ENCODE measurements at regions of chr1 and their contacts with region 1.

Region 1: GRCh38 chr1:85109475-85109874 is 61.2 kb upstream of the MCOLN3 start:
- DNase-seq: peak in 1 of 2 experiments; percentile 50
- H3K4me3 ChIP-seq: no peak overlapping the region
- H3K27ac ChIP-seq: no peak overlapping the region
- H3K4me1 ChIP-seq: no peaks in the 10 kb centered on the region
- H3K27me3 ChIP-seq: no peaks in the 10 kb centered on the region
- CTCF ChIP-seq: peak; percentile 82 to 94 (median 93)
- EP300 ChIP-seq: no peak
- POLR2A ChIP-seq: no peak
- RAD21 ChIP-seq: peak; percentile 97 to 98

Region 2: DNA sequence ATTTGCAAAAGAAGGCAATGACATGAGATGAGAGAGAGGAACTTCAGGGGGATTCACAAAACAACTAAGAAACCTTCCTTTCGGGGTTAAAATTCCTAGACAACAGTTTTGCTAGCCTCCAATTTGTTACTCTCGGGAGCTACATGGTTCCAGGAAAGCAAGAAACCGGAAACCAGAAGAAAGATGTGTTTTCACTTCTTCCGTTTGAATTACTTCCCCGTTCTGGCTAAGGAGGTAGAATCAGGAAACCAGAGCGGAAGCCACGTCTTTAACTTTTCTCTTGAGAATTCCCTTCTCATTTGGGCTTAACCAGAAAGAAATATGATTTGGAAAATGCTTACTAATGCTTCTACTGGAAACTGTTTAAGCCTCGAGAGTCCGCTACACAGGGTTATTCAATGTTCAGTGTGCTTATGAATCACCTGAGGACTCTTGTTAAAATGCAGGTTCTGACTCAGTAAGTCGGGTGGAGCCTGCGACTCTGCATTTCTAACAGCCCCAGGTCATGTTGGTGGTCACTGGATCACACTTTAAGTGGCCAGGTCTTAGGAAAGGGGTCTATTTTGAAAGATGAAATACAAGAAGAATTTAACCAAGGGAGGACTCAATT is 17.7 kb before region 1 on chr1:
- CTCF ChIA-PET with region 1: interaction called, 14 read pairs
- POLR2A ChIA-PET with region 1: no interaction called
- DNase-seq: no peak
- H3K4me3 ChIP-seq: no peak overlapping the region
- H3K27ac ChIP-seq: no peak overlapping the region
- H3K4me1 ChIP-seq: no peaks in the 10 kb centered on the region; a peak in 2 of 7 replicates
- H3K27me3 ChIP-seq: no peaks in the 10 kb centered on the region
- CTCF ChIP-seq: no peak
- EP300 ChIP-seq: no peak
- POLR2A ChIP-seq: no peak
- RAD21 ChIP-seq: no peak

Region 3: DNA sequence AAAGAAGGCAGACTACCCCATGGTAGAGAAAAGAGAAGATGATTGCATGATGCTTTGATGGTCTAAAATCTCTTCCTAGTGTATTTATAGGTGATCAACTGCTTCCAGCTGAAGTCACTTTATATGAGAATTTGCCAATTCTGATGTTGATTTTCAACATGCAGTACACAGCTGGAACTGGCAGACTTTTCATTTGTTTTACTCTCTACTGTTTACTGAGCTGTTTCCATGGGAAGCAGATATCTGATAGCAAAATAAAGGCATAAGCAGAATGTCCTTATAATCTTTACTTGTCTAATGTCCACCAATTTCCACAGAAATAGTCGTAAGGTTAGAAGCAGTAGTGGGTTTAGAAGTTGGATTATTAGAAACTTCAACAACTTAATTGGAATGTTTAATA is 16.4 kb after region 1 on chr1:
- CTCF ChIA-PET with region 1: interaction called, 16 read pairs
- POLR2A ChIA-PET with region 1: no interaction called
- DNase-seq: no peak
- H3K4me3 ChIP-seq: no peak overlapping the region
- H3K27ac ChIP-seq: no peak overlapping the region
- H3K4me1 ChIP-seq: no peaks in the 10 kb centered on the region
- H3K27me3 ChIP-seq: peaks cover 0 to 1% (median 0%) of the 10 kb centered on the region in 4 experiments; a peak in 1 of 7 replicates
- CTCF ChIP-seq: no peak
- EP300 ChIP-seq: no peak
- POLR2A ChIP-seq: no peak
- RAD21 ChIP-seq: no peak

Region 4: GRCh38 chr1:85148524-85149250 is 39.2 kb after region 1 on chr1:
- CTCF ChIA-PET with region 1: interaction called, 12 read pairs
- POLR2A ChIA-PET with region 1: no interaction called
- DNase-seq: no peak
- H3K4me3 ChIP-seq: no peak overlapping the region
- H3K27ac ChIP-seq: no peak overlapping the region
- H3K4me1 ChIP-seq: peaks cover 3 to 14% (median 11%) of the 10 kb centered on the region in 4 experiments; a peak in 5 of 7 replicates
- H3K27me3 ChIP-seq: no peaks in the 10 kb centered on the region
- CTCF ChIP-seq: no peak
- EP300 ChIP-seq: no peak
- POLR2A ChIP-seq: no peak
- RAD21 ChIP-seq: no peak

Region 5: GRCh38 chr1:85230305-85230980 is 121.0 kb after region 1 on chr1:
- CTCF ChIA-PET with region 1: interaction called, 52 read pairs
- POLR2A ChIA-PET with region 1: no interaction called
- DNase-seq: no peak
- H3K4me3 ChIP-seq: no peak overlapping the region
- H3K27ac ChIP-seq: no peak overlapping the region
- H3K4me1 ChIP-seq: peaks cover 0 to 5% (median 2%) of the 10 kb centered on the region in 4 experiments; a peak in 4 of 7 replicates
- H3K27me3 ChIP-seq: no peaks in the 10 kb centered on the region
- CTCF ChIP-seq: peak; percentile 45 to 61 (median 60)
- EP300 ChIP-seq: no peak
- POLR2A ChIP-seq: no peak
- RAD21 ChIP-seq: peak; percentile 52 to 69

Region 6: GRCh38 chr1:85240174-85240601 is 130.7 kb after region 1 on chr1:
- CTCF ChIA-PET with region 1: interaction called, 38 read pairs
- POLR2A ChIA-PET with region 1: no interaction called
- DNase-seq: no peak
- H3K4me3 ChIP-seq: no peak overlapping the region
- H3K27ac ChIP-seq: no peak overlapping the region
- H3K4me1 ChIP-seq: peaks cover 0 to 1% (median 0%) of the 10 kb centered on the region in 4 experiments; a peak in 2 of 7 replicates
- H3K27me3 ChIP-seq: no peaks in the 10 kb centered on the region
- CTCF ChIP-seq: peak in 2 of 3 experiments; percentile 48 to 64; a peak in 3 of 4 replicates
- EP300 ChIP-seq: no peak
- POLR2A ChIP-seq: no peak
- RAD21 ChIP-seq: peak; percentile 79 to 85

Measured in H1 (cell line).